ENCODE measurements at regions of chr13 and their contacts with region 1.

Region 1: DNA sequence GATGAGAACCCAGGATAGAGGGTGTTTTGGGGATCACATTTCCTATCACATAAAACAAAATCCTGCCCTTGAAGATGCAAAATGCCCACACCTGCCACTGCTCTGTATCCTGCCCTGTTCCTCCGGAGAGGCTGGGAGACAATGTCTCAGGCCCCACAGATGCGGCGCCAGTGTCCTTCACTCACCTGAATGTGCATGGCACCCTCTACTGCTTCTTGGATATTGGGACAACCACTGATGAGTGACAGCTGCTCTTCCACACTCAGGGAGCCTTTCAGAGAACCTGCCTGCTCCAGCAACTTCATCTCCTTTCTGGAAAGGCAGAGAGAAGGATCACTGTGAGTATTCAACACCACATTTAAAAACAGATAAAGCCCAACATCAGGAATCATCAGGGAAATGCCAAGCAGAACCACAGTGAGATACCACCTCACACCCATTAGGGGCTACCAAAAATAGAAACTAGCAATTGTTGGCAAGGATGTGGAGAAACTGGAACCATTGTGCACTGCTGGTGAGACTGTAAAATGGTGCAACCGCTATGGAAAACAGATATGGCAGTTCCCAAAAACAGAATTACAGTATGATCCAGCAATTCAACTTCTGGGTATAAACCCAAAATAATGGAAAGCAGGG is 36.4 kb downstream of the CRYL1 start:
- DNase-seq: peak; percentile 52
- H3K4me3 ChIP-seq: no peak overlapping the region
- H3K27ac ChIP-seq: no peak overlapping the region
- H3K4me1 ChIP-seq: no peaks in the 10 kb centered on the region
- H3K27me3 ChIP-seq: no peaks in the 10 kb centered on the region
- CTCF ChIP-seq: peak in 4 of 5 experiments; percentile 33 to 41 (median 38)
- EP300 ChIP-seq: no peak
- POLR2A ChIP-seq: no peak

Region 2: GRCh38 chr13:20197361-20197834 is 291.9 kb before region 1 on chr13:
- in situ Hi-C with region 1: loop called in 3 of 4 experiments (anchors 10 to 25 kb)
- intact Hi-C with region 1: no loop called
- DNase-seq: no peak
- H3K4me3 ChIP-seq: no peak overlapping the region
- H3K27ac ChIP-seq: peak overlapping the region in 3 of 4 donors; percentile 40 to 59 (median 48)
- H3K4me1 ChIP-seq: peaks cover 10 to 40% (median 25%) of the 10 kb centered on the region in 4 donors
- H3K27me3 ChIP-seq: peaks cover 48% of the 10 kb centered on the region
- CTCF ChIP-seq: peak; percentile 63 to 76 (median 72)
- EP300 ChIP-seq: no peak
- POLR2A ChIP-seq: no peak

Measured in transverse colon (tissue), 4 donors.